WTC11 (cell line): ENCODE measurements at regions of chr20 and their contacts with region 1.

Region 1: GRCh38 chr20:38893565-38894090 is 32.6 kb upstream of the FAM83D start:
- DNase-seq: peak; percentile 89
- ATAC-seq: peak; percentile 88
- H3K4me3 Mint-ChIP-seq: peak overlapping the region; percentile 51
- H3K27ac Mint-ChIP-seq: no peak overlapping the region
- H3K4me1 Mint-ChIP-seq: peaks cover 14% of the 10 kb centered on the region
- H3K27me3 Mint-ChIP-seq: peaks cover 3% of the 10 kb centered on the region; the same call in 1 of the 2 replicates
- CTCF ChIP-seq: peak; percentile 94

Region 2: DNA sequence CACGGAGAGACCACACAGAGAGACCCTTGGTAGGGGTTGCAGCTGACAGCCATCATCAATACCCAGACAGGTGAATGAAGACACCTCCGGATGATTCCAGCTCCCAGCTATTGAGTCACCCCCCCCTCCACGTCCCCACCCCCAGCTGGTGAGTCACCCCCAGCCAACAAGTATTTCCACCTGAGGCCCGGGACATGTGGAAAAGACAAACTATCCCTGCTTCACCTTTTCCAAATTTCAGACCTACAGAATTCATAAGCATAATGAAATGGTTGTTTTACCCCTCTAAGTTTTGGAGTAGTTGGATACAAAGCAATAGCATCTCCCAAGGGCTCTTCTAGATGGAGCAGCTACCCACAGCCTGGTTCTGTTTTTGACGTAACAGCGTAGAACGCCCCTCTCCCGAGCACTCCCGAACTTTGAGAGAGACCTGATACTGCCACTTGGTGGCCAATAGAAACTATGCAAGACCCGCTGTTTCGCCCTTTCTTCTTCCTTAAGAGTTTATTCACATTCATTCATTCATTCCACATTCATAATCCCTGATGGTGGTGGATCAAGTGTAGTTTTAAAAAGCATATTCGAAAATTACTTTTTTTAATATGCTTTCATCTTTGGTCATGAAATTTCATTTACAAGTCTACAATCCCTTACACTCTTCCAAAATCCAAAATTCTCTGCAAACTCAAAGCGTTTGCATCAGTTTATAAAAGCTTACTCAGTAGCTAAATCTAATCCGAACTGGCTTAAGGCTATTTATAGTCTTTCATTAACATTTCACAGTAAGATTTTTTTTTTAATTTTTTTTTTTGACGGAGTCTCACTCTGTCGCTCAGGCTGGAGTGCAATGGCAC is 103.2 kb before region 1 on chr20:
- CTCF ChIA-PET with region 1: interaction called, 23 read pairs
- POLR2A ChIA-PET with region 1: no interaction called
- DNase-seq: peak; percentile 67
- ATAC-seq: peak; percentile 92
- H3K4me3 Mint-ChIP-seq: no peak overlapping the region
- H3K27ac Mint-ChIP-seq: no peak overlapping the region
- H3K4me1 Mint-ChIP-seq: no peaks in the 10 kb centered on the region
- H3K27me3 Mint-ChIP-seq: peaks cover 5% of the 10 kb centered on the region; the same call in 1 of the 2 replicates
- CTCF ChIP-seq: peak; percentile 65

Region 3: GRCh38 chr20:38818113-38819065 is 75.2 kb before region 1 on chr20:
- CTCF ChIA-PET with region 1: interaction called, 11 read pairs
- POLR2A ChIA-PET with region 1: no interaction called
- DNase-seq: no peak
- ATAC-seq: peak; percentile 83
- H3K4me3 Mint-ChIP-seq: peak overlapping the region; percentile 4
- H3K27ac Mint-ChIP-seq: peak overlapping the region; percentile 29; the same call in 1 of the 2 replicates
- H3K4me1 Mint-ChIP-seq: peaks cover 35% of the 10 kb centered on the region
- H3K27me3 Mint-ChIP-seq: no peaks in the 10 kb centered on the region
- CTCF ChIP-seq: no peak

Region 4: GRCh38 chr20:38883081-38883980 is 10.3 kb before region 1 on chr20:
- CTCF ChIA-PET with region 1: interaction called, 46 read pairs
- POLR2A ChIA-PET with region 1: interaction called, 7 read pairs
- DNase-seq: no peak
- ATAC-seq: no peak
- H3K4me3 Mint-ChIP-seq: no peak overlapping the region
- H3K27ac Mint-ChIP-seq: no peak overlapping the region
- H3K4me1 Mint-ChIP-seq: peaks cover 20% of the 10 kb centered on the region
- H3K27me3 Mint-ChIP-seq: no peaks in the 10 kb centered on the region; the same call in 1 of the 2 replicates
- CTCF ChIP-seq: no peak

Region 5: GRCh38 chr20:39049684-39050554 is 156.3 kb after region 1 on chr20:
- CTCF ChIA-PET with region 1: interaction called, 10 read pairs
- POLR2A ChIA-PET with region 1: no interaction called
- DNase-seq: peak; percentile 88
- ATAC-seq: peak; percentile 81
- H3K4me3 Mint-ChIP-seq: peak overlapping the region; percentile 78
- H3K27ac Mint-ChIP-seq: no peak overlapping the region
- H3K4me1 Mint-ChIP-seq: peaks cover 4% of the 10 kb centered on the region; the same call in 1 of the 2 replicates
- H3K27me3 Mint-ChIP-seq: peaks cover 18% of the 10 kb centered on the region
- CTCF ChIP-seq: peak; percentile 98